OCI-LY7 (cell line): ENCODE measurements at regions of chr19 and their contacts with region 1.

Region 1: GRCh38 chr19:5690125-5690954 is at the start of gene RPL36:
- DNase-seq: peak; percentile 97
- H3K4me3 ChIP-seq: peak within 1 kb of the TSS; percentile 88
- H3K27ac ChIP-seq: peak within 1 kb of the TSS; percentile 73
- H3K4me1 ChIP-seq: peaks cover 18% of the 10 kb centered on the region
- CTCF ChIP-seq: peak; percentile 85
- total RNA-seq, gene RPL36: 1,836 and 1,936 TPM in 2 replicates

Region 2: GRCh38 chr19:5665796-5666513 is 24.4 kb before region 1 on chr19:
- CTCF ChIA-PET with region 1: no interaction called
- POLR2A ChIA-PET with region 1: no interaction called
- intact Hi-C with region 1: no loop called
- DNase-seq: no peak
- H3K4me3 ChIP-seq: no peak overlapping the region
- H3K27ac ChIP-seq: no peak overlapping the region
- H3K4me1 ChIP-seq: no peaks in the 10 kb centered on the region
- CTCF ChIP-seq: peak; percentile 35; the same call in 1 of the 2 replicates

Region 3: DNA sequence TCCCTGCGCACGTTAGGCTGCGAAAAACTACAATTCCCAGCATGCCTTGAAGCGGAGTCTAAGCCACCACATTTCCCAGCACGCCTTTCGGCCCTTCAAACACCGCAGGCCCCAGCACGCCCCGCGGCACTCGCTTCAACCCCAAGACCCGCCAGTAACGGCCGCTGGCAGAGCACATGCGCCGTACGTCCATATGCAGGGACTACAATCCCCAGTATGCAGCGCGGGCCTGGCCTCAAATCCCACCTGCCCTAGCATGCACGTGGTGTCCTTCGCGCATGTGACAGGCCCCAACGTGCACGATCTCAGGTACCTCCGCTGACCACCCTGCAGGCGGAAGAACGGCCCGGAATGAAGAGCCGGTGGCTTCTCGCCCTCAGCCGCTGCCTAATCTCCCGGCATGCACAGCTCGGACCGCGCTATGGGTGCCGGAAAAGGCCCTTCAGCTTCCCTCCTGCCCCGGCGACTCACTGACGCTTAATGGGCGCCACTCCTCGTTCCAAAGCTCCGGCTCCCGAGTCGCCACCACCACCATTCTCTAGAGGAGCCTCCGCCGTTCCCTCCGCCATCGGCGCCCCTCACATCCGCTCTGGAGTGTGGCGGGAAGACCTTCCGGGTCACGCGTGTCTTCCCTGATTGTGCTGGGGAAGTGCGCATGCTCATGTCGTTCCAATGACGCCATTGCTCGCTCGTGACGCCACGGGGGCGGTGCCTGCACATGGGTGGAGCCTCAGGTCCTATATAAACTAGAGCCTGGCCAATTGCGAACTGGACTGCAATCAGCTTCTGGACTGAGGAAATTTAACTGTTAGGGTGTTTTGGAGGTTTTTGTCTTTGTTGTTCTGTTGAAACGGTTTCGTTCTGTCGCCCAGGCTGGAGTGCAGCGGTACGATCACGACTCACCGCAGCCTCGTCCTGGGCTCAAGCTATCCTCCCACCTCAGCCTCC is 100.5 kb after region 1 on chr19 and contains the start of gene DUS3L:
- CTCF ChIA-PET with region 1: no interaction called
- POLR2A ChIA-PET with region 1: interaction called, 3 read pairs
- intact Hi-C with region 1: loop called (anchors 2 kb)
- DNase-seq: peak; percentile 99
- H3K4me3 ChIP-seq: peak within 1 kb of the TSS; percentile 78
- H3K27ac ChIP-seq: peak within 1 kb of the TSS; percentile 81
- H3K4me1 ChIP-seq: peaks cover 9% of the 10 kb centered on the region
- CTCF ChIP-seq: no peak
- total RNA-seq, gene DUS3L: 55.8 and 63.7 TPM in 2 replicates